Ovary (tissue), 10 donors: ENCODE measurements at regions of chr11 and their contacts with region 1.

Region 1: DNA sequence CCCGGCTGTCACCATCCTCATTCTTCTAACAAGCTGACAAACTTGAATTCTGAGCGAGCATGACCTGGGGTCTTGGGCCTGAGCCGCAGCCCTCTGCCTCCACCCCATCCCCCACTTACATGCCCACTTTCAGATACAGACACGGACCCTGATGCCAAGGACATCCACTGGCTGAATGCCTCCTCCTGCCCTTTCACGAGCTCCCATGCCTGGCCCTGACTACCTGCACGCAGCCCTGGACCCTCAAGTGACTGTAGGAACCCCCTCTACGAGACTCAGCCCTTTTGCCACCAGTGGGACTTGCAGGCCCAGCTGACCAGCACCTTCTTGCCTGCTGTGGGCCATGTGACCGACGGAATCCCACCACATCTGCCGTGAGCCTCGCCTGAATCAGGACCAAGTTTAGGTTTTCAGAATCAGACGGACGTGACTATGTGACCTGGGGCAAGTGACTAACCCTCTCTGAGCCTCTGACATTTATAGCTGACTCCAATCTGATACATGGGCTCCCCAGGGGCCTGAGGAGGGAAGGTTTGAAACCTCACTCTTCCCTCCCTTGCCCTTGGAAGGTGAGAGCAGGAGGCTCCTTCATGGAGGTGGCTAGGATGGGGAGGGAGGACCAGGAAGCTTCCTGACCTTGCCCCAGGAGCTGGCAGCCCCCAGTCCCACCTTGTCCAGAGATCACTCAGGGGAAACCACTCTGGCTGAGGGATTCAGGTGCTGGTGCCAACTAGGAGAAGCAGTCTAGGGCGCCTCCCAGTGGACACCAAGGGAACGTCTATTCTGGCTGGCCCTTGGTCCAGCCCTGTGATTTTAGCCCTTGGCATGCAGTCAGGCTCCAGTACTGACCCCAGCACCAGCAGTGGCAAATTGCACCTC is 46.9 kb upstream of the SYT7 start:
- DNase-seq: peak; percentile 50 to 83 (median 62)
- H3K4me3 ChIP-seq: no peak overlapping the region
- H3K27ac ChIP-seq: no peak overlapping the region
- H3K4me1 ChIP-seq: no peaks in the 10 kb centered on the region
- H3K27me3 ChIP-seq: no peaks in the 10 kb centered on the region
- CTCF ChIP-seq: peak in 2 of 3 donors; percentile 44 to 60
- EP300 ChIP-seq: no peak
- POLR2A ChIP-seq: no peak

Region 2: GRCh38 chr11:61529537-61530225 is 98.1 kb before region 1 on chr11:
- intact Hi-C with region 1: no loop called
- DNase-seq: peak; percentile 59 to 86 (median 75)
- H3K4me3 ChIP-seq: no peak overlapping the region
- H3K27ac ChIP-seq: no peak overlapping the region
- H3K4me1 ChIP-seq: peaks cover 3% of the 10 kb centered on the region
- H3K27me3 ChIP-seq: no peaks in the 10 kb centered on the region
- CTCF ChIP-seq: no peak
- EP300 ChIP-seq: no peak
- POLR2A ChIP-seq: no peak

Region 3: DNA sequence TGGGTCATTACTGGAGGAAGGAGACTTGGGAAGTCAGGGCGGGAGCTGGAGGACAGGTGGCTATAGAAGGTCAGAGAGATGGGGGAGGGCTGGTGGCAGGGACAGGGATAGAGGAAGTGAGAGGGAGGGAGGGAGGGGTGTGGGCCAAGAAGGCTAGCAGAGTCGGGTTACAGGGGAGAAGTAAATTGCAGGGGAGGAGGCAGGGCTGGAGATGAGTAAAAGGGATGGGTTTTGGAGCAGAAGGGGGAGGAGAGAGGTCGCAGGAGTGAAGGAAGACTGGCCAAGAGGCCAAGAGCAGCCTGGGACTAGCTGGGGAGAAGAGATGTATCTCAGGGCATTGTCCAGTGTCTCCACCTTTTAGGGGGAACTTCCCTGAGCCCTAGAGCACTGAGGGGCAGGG is 86.2 kb before region 1 on chr11:
- intact Hi-C with region 1: loop called in 1 of 4 experiments (anchors 10 kb)
- DNase-seq: peak in 4 of 5 donors; percentile 52 to 61 (median 56)
- H3K4me3 ChIP-seq: no peak overlapping the region
- H3K27ac ChIP-seq: peak overlapping the region in 1 of 2 donors; percentile 48
- H3K4me1 ChIP-seq: peaks cover 26% of the 10 kb centered on the region
- H3K27me3 ChIP-seq: no peaks in the 10 kb centered on the region
- CTCF ChIP-seq: no peak
- EP300 ChIP-seq: no peak
- POLR2A ChIP-seq: no peak

Region 4: DNA sequence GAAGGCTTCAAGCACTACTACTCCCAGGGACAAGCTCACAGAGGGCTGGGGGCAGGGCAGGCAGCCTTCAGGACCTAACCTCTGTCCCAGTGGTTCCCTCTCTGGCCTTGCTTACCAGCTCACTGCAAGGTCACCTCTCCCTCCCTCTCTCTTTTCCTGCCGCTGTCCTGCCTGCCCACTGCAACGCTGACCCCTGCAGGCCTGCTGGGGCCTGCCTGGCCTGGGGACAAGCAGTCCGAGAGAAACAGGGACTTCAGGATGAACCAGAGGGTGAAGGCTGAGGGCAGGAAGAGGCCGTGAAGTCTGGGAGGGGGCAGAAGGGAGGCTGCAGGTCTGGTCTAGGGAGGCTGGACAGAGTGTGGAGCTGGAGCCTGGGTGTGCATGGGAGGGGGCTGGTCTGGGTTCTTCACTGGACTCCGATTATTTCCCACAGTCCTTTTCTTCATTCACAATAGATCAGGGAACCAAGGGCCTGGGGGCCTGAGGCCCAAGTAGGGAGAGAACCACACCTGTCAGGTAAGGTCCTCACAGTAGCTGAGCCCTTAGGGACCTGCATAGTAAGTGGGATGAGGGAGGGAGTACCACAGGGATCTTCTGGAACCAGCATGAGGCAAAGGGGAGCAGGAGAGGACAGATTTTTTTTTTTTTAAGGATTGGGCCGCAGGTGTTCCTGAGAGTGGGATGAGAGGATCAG is 49.9 kb before region 1 on chr11:
- intact Hi-C with region 1: loop called in 1 of 4 experiments (anchors 2 kb)
- DNase-seq: no peak
- H3K4me3 ChIP-seq: no peak overlapping the region
- H3K27ac ChIP-seq: no peak overlapping the region
- H3K4me1 ChIP-seq: no peaks in the 10 kb centered on the region
- H3K27me3 ChIP-seq: no peaks in the 10 kb centered on the region
- CTCF ChIP-seq: no peak
- EP300 ChIP-seq: no peak
- POLR2A ChIP-seq: no peak